ENCODE measurements at regions of chr20 and their contacts with region 1.

Region 1: GRCh38 chr20:53708129-53708968 is 114.7 kb upstream of the ZNF217 start:
- DNase-seq: peak; percentile 42
- H3K4me3 Mint-ChIP-seq: peak overlapping the region; percentile 64
- H3K27ac Mint-ChIP-seq: peak overlapping the region; percentile 97
- H3K4me1 Mint-ChIP-seq: peaks cover 45% of the 10 kb centered on the region
- H3K27me3 Mint-ChIP-seq: no peaks in the 10 kb centered on the region

Region 2: DNA sequence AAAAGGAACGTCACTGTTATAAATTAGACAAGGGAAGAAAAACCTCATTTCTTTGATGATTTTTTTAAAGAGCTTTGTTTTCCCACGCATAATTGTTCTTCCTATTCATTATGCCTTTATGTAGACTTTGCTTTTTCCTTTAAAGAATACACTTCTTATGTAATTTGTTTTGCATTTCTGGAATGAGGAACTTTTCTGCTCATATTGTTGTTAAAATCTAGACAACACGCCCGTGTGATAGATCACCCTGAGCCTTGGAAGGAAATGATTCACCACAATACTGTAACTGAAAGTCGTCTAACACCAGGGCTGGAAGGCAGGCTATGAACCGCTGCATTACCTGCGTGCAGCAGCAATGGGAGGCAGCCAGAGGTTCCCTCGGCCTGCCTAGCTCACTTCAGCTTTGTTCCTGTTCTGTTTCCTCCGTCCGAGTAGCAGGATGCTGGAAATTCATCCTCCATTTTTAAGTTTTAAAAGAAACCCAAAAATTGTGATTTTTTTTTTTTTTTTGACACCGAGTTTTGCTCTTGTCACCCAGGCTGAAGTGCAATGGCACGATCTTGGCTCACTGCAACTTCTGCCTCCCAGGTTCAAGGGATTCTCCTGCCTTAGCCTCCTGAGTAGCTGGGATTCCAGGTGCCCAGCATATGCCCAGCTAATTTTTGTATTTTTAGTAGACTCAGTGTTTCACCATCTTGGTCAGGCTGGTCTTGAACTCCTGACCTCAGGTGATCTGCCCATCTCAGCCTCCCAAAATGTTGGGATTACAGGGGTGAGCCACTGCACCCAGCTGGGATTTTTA is 65.1 kb before region 1 on chr20:
- intact Hi-C with region 1: loop called (anchors 1 kb)
- DNase-seq: peak; percentile 67
- H3K4me3 Mint-ChIP-seq: peak overlapping the region; percentile 76
- H3K27ac Mint-ChIP-seq: peak overlapping the region; percentile 95
- H3K4me1 Mint-ChIP-seq: peaks cover 33% of the 10 kb centered on the region
- H3K27me3 Mint-ChIP-seq: no peaks in the 10 kb centered on the region

Region 3: GRCh38 chr20:53678990-53679596 is 29.3 kb before region 1 on chr20:
- intact Hi-C with region 1: no loop called
- DNase-seq: no peak
- H3K4me3 Mint-ChIP-seq: no peak overlapping the region
- H3K27ac Mint-ChIP-seq: peak overlapping the region; percentile 50
- H3K4me1 Mint-ChIP-seq: peaks cover 26% of the 10 kb centered on the region
- H3K27me3 Mint-ChIP-seq: no peaks in the 10 kb centered on the region

Region 4: DNA sequence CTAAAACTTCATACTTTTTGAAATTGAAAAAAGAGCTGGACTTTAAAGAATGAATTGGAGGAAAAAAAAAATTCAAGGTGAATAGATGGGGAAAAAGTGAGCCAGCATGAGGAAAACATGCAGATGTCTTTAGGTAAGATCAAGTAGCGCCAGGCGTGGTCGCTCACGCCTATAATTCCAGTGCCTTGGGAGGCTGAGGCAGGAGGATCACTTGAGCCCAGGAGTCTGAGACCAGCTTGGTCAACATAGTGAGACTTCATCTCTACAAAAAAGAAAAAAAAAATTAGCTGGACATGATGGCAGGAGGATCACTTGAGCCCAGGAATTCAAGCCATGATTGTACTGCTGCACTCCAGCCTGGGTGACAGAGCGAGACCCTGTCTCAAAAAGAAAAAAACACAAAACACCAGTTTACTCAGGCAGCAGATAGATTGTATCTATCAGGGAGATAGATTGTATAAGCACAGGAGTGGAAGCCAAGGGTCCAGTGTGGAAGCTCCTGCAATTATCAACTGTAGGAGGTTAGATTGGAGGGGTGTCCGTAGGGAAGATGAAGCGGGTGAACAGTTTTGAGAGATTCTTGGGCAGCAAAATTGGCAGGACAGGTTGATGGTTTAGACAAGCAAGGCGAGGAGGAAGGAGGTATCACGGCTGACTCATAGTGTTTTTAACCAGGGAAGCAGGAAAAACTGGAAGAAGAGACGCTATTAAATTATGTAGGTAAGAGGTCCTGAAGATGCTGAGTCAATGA is 17.1 kb before region 1 on chr20:
- intact Hi-C with region 1: loop called (anchors 1 kb)
- DNase-seq: no peak
- H3K4me3 Mint-ChIP-seq: no peak overlapping the region
- H3K27ac Mint-ChIP-seq: peak overlapping the region; percentile 0
- H3K4me1 Mint-ChIP-seq: peaks cover 35% of the 10 kb centered on the region
- H3K27me3 Mint-ChIP-seq: no peaks in the 10 kb centered on the region

Region 5: GRCh38 chr20:53750827-53751619 is 42.7 kb after region 1 on chr20:
- intact Hi-C with region 1: loop called (anchors 1 kb)
- DNase-seq: peak; percentile 59
- H3K4me3 Mint-ChIP-seq: peak overlapping the region; percentile 59
- H3K27ac Mint-ChIP-seq: peak overlapping the region; percentile 99
- H3K4me1 Mint-ChIP-seq: peaks cover 63% of the 10 kb centered on the region
- H3K27me3 Mint-ChIP-seq: no peaks in the 10 kb centered on the region

Region 6: DNA sequence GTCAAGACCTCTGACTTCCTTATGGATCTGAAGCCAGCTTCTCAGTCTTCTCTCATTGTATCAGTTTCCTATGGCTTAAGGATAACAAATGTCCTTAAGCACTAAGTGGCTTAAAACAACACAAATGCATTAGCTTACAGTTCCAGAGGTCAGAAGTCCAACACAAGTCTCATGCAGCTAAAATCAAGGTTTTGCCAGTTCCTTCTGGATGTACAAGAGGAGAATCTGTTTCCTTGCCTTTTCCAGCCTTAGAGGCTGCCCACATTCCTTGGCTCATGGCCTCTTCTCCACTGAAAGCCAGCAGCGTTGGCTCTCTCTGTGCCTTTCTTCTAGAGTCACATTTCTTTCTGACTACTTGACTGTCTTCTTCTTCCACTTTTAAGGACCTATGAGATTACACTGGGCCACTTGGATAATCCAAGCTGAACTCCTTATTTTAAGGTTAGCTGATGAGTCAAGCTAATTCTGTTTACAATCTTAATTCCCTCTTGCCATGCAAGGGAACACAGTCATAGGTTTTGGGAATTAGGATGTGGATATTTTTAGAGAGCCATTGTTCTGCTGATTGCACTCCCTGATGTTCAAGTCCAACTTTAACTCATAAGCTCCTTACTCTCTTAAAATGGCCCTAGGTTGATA is 183.1 kb after region 1 on chr20:
- intact Hi-C with region 1: loop called (anchors 2 kb)
- DNase-seq: no peak
- H3K4me3 Mint-ChIP-seq: no peak overlapping the region
- H3K27ac Mint-ChIP-seq: no peak overlapping the region
- H3K4me1 Mint-ChIP-seq: peaks cover 45% of the 10 kb centered on the region
- H3K27me3 Mint-ChIP-seq: no peaks in the 10 kb centered on the region

Region 7: GRCh38 chr20:54148947-54149503 is 440.7 kb after region 1 on chr20:
- intact Hi-C with region 1: no loop called
- DNase-seq: no peak
- H3K4me3 Mint-ChIP-seq: no peak overlapping the region
- H3K27ac Mint-ChIP-seq: no peak overlapping the region
- H3K4me1 Mint-ChIP-seq: no peaks in the 10 kb centered on the region
- H3K27me3 Mint-ChIP-seq: peaks cover 9% of the 10 kb centered on the region